Right ventricle myocardium superior (tissue), 1 donor: ENCODE measurements at regions of chrX and their contacts with region 1.

Region 1: DNA sequence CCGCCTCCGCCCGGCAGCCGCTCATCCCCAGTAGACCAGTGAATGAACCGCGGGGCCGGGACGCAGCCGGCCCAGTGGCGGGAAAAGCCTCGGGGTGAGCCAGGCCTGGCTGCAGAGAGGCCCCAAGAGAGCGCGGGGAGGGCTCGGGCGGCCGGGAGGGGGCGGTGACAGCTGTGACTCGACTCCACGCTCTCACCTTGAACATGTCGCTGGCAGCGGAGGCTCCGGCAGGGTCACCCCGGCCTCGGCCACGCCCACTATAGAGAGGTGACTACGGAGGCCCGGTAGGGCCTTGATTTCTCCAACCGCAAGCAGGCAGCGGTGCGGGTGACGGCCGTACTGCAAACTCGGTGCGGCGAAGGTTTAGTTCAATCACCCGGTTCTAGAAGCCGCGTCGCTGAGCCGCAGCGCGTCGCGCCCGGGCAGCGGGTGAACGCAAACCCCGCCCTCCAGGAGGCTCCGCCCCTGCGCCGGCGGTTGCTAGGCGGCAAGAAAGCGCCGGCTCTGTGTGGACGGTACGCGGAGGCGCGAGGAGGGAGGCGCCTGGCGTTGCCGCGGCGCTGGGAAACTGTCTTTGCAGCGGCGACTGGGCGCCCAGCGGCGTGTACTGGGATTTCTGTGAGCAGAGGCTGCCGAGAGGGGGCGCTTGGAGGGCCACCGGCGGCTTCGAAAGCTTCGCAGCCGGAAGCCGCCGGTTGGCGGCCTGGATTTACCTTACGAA is at the starts of genes APOO and CXorf58:
- DNase-seq: peak; percentile 95
- ATAC-seq: peak; percentile 98
- total RNA-seq, gene APOO: 112 TPM
- total RNA-seq, gene CXorf58: 0.22 TPM

Region 2: GRCh38 chrX:23694606-23695005 is 213.1 kb before region 1 on chrX:
- intact Hi-C with region 1: loop called (anchors 10 kb)
- DNase-seq: peak; percentile 54
- ATAC-seq: peak; percentile 64

Region 3: GRCh38 chrX:23756157-23756559 is 151.5 kb before region 1 on chrX:
- intact Hi-C with region 1: loop called (anchors 10 kb)
- DNase-seq: peak; percentile 50
- ATAC-seq: peak; percentile 61

Region 4: GRCh38 chrX:23822397-23822796 is 85.3 kb before region 1 on chrX:
- intact Hi-C with region 1: no loop called
- DNase-seq: no peak
- ATAC-seq: no peak

Region 5: GRCh38 chrX:23959781-23960180 is 52.1 kb after region 1 on chrX:
- intact Hi-C with region 1: no loop called
- DNase-seq: no peak
- ATAC-seq: no peak

Region 6: DNA sequence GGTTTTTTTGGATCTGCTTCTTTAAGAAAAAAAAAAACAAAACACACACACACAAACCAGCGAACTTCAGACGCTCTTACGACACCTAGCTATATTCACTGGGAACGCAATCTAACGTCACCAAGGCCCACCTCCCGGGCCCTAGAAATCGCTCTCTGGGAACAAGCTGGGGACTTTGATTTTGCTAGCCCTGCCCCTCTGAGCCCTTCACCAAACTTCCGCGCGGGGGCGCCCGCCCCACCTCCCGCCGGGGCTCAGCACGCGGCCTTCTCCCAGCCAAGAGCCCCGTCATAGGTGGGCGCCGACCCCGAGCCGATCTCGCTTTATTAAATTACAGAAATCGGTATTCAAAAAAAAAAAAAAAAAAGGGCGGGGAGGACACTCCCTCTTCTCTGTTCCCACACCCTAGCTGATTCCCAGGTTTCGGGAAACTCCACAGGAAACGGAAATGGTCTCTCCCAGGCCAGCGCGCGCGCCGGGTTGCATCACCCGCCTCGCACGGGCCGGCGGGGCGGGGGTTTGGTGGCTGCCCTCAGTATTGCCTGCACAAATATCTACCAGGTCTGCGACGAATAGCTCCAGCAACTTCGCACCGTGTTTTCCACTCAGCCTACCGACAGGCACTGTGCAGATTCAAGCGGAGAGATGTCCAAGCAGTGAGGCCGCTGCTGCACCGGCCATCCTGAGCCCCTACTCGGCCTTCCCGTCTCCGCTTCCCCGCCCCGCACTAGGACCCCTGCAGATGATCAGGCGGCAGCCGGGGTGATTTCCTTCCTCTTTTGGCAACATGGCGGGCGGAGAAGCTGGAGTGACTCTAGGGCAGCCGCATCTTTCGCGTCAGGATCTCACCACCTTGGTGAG is 146.8 kb after region 1 on chrX and contains the start of gene EIF2S3:
- intact Hi-C with region 1: loop called (anchors 10 kb)
- DNase-seq: peak; percentile 90
- ATAC-seq: peak; percentile 98
- total RNA-seq, gene EIF2S3: 64.4 TPM

Region 7: DNA sequence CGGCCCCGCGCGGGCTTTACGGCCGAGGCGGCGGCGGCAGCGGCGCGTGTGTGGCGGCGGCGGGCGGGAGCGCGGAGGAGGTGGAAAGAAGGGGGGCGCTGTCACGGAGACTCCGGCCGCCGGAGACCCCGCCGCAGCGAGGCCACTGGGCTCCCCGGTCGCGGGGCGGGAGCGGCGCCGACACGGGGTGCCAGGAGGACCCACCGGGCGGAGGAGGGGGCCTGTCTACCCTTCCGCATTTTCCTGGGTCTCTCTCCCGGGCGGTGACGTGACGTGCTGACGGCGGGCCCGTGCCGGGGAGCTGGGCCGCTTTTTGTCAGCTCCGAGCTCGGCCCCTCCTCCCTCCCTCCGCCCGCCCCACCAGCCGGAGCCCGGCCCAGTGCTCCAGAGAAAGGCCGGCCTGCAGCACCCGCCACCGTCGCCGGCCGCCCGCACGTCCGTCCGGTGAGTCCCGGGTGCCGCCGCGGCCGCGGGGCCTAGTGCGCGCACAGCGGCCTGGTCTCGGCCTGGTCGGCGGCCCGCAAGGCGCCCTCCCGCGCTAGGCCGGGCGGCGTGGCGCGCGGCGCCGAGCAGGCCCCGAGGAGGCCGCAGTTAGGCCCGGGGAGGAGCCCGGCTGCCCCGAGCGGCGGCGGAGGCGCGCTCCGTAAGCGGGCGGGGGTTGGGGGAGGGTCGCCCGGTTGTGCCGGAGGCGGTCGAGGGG is 241.8 kb after region 1 on chrX and contains the start of gene ZFX:
- intact Hi-C with region 1: loop called (anchors 5 kb)
- DNase-seq: peak; percentile 79
- ATAC-seq: peak; percentile 64
- total RNA-seq, gene ZFX: 32.9 TPM